ENCODE measurements at regions of chr7 and their contacts with region 1.

Region 1: GRCh38 chr7:27627146-27627545 is 35.5 kb downstream of the HIBADH start:
- DNase-seq: no peak
- ATAC-seq: no peak
- H3K4me3 ChIP-seq: no peak overlapping the region
- H3K27ac ChIP-seq: no peak overlapping the region
- H3K4me1 ChIP-seq: no peaks in the 10 kb centered on the region
- CTCF ChIP-seq: no peak
- EP300 ChIP-seq: no peak
- POLR2A ChIP-seq: no peak
- RAD21 ChIP-seq: no peak

Region 2: DNA sequence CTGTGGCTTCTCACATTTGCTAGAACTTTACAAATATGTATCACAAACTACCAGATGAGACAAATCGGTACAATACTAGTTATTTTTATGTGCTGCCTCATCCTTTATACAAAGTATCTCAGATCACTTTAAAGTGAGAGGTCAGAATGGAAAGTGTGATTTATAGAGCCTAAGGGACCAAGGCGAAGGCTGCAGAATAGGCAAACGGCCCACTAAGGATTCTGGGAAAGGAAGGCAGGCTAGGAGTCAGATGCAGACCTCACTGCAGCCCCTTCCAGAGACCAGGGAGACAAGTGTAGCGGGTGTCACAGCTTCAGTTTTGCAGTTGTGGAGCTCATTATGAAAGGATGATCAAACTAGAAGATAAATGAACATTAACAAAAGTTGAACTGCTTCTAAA is 155.1 kb before region 1 on chr7:
- CTCF ChIA-PET with region 1: no interaction called
- POLR2A ChIA-PET with region 1: no interaction called
- DNase-seq: no peak
- ATAC-seq: no peak
- H3K4me3 ChIP-seq: no peak overlapping the region
- H3K27ac ChIP-seq: no peak overlapping the region
- H3K4me1 ChIP-seq: no peaks in the 10 kb centered on the region
- CTCF ChIP-seq: no peak
- EP300 ChIP-seq: no peak
- POLR2A ChIP-seq: no peak
- RAD21 ChIP-seq: no peak

Region 3: DNA sequence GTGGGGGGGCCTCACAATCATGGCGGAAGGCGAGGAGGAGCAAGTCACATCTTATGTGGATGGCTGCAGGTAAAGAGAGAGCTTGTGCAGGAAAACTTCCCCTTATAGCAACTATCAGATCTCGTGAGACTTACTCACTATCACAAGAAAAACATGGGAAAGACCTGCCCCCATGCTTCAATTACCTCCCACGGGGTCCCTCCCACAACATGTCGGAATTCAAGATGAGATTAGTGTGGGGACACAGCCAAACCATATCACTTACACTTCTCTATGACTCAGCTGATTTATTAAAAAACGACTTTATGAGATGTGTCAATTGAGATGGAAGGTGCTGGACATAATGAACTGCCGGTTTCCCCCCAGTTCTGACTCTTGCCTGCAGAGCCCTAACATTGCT is 1543.6 kb after region 1 on chr7:
- CTCF ChIA-PET with region 1: no interaction called
- POLR2A ChIA-PET with region 1: interaction called, 10 read pairs
- DNase-seq: no peak
- ATAC-seq: no peak
- H3K4me3 ChIP-seq: no peak overlapping the region
- H3K27ac ChIP-seq: no peak overlapping the region
- H3K4me1 ChIP-seq: no peaks in the 10 kb centered on the region
- CTCF ChIP-seq: no peak
- EP300 ChIP-seq: no peak
- POLR2A ChIP-seq: no peak
- RAD21 ChIP-seq: no peak

Measured in A549 (cell line).